Gastrocnemius medialis (tissue), 4 donors: ENCODE measurements at regions of chr22 and their contacts with region 1.

Region 1: DNA sequence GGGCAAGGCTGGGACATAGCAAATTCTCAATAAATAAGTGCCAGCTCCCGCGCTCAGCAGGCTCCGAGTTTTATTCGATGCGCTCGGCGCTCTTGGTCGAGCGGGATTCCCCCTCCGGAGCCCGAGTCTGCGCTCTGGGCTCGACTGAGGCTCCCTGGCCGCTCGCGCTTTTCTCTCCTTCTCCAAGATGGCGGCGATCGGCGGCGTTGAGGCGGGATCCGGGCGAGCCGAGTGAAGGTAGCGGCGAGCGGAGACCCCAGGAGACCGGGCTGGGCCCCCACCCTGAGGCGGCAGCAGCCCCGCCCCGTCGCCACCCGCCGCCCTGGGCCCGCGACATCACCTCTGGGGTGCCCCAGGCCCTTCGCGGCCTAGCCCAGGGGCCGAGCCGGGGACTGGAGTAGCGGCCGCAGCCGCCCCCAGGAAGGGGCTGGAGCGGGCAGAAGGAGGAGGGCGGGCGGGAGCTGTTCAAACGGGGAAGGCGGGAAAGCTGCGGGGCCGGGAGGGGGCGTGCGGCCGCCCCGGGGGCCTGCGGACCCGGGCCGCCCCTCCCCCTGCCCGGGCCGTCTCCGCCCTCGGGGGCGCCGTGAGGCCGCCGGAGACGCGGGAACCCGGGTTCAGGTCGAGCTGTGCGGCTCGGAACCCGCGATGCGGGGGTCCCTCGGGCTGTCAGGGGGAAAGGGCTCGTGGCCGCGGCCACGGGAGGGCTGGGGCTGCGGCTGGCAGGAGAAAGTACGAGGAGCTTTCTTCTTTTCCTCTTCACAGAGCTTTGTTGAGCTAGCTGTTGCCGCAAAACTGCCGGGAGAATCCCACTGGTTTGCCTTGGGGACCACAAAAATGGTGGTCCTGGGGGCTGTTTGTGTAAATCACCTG is at the start of gene HMGXB4:
- DNase-seq: peak; percentile 69 to 79
- ATAC-seq: peak; percentile 95 to 96
- H3K4me3 ChIP-seq: peak within 1 kb of the TSS; percentile 83 to 98 (median 90)
- H3K27ac ChIP-seq: peak within 1 kb of the TSS; percentile 83 to 99 (median 97)
- H3K4me1 ChIP-seq: peaks cover 15 to 18% of the 10 kb centered on the region in 2 donors
- H3K27me3 ChIP-seq: no peaks in the 10 kb centered on the region
- CTCF ChIP-seq: peak in 1 of 5 experiments; percentile 39
- POLR2A ChIP-seq: peak in 1 of 2 donors; percentile 8
- total RNA-seq, gene HMGXB4: 8.3 to 19.2 (median 12.4) TPM

Region 2: DNA sequence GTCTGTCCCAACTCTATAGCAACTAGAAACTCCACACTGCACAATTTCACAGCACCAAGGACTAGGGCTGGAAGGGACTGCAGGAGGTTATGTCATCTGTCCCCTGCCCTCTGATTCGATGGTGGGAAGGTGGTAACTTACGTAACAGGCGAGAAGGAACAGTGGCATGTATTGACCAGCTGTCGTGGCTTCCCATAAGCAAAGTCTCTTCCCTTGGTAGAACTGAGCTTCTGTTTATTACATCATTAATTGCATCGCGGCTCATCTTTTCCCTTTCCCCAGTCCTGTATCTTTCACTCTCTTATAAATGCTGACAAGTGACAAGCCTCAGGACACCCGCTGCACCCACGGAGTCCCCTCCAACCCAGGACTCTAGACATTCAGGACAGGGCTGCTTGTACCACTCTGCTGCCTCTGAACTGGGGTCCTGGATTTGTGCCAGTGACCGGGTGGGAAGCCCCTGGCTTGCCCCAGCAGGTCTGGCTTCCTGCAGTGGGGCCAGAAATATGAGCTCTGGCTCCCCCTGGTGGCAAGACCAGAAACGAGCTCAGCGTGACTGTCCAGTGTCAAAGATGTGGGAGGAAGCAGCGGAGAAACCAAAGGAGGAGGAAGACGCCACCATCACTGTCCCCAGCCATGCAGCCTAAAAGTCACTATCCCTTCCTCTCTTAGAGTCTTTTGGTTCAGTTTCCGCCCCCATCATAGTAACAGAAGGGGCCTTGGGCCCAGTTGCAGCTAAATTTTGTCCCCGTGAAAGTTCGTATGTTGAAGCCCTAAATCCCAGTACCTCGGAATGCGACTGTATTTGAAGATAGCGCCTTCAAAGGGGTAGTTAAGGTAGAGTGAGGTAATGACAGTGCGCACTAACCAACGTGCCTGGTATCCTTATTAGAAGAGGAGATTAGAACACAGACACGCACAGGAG is 107.1 kb before region 1 on chr22:
- in situ Hi-C with region 1: no loop called
- intact Hi-C with region 1: no loop called
- DNase-seq: peak in 1 of 2 donors; percentile 19
- ATAC-seq: no peak
- H3K4me3 ChIP-seq: peak overlapping the region in 1 of 4 donors; percentile 28
- H3K27ac ChIP-seq: no peak overlapping the region
- H3K4me1 ChIP-seq: no peaks in the 10 kb centered on the region
- H3K27me3 ChIP-seq: peaks cover 0 to 3% (median 0%) of the 10 kb centered on the region in 3 donors
- CTCF ChIP-seq: peak in 3 of 5 experiments; percentile 46 to 63 (median 47)
- POLR2A ChIP-seq: no peak

Region 3: DNA sequence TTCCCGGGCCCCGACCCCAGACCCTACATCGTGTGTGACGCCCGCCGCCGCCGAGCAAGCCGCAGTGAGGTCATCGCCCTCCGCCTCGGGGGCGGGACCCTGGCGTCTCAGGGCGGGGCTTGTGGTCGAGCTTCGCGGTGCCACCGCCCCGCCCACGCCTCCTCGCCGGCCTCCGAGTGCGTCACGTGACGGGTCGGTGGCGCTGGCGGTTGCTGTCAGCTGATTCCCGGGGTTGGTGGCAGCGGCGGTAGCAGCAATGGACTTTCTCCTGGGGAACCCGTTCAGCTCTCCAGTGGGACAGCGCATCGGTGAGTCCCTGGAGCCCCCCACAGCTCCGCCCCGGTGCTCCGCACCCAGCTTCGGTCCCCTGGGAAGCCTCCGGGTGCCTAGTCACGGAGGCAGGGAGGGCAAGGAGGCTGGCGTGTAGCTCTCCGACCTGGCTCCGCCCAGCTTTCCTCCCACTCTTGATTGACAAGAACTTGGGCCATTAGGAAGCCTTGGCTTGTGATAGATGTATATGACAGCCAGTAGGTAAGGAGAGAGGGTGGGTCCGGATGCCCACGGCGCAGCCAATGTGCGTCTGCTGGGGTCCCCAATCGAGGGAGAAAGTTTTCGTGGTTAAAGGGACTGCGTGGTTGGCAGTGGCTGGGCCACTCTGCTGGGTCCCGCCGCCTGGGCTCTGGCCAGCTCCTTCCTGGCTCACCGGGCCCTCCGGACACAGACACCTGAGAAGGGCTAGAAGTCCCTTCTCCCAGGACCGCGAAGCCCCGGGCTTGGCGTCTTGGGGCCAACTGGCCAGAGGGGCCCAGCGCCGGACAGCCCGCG is 42.3 kb after region 1 on chr22 and contains the start of gene TOM1:
- in situ Hi-C with region 1: no loop called
- intact Hi-C with region 1: loop called (anchors 5 kb)
- DNase-seq: peak; percentile 96 to 98
- ATAC-seq: peak; percentile 87 to 91
- H3K4me3 ChIP-seq: peak within 1 kb of the TSS; percentile 80 to 86 (median 82)
- H3K27ac ChIP-seq: peak within 1 kb of the TSS; percentile 98 to 99 (median 98)
- H3K4me1 ChIP-seq: peaks cover 37 to 39% of the 10 kb centered on the region in 2 donors
- H3K27me3 ChIP-seq: no peaks in the 10 kb centered on the region
- CTCF ChIP-seq: peak in 1 of 5 experiments; percentile 36
- POLR2A ChIP-seq: peak; percentile 98
- total RNA-seq, gene TOM1: 363 to 609 (median 425) TPM